Esophagus muscularis mucosa (tissue), 4 donors: ENCODE measurements at regions of chr3 and their contacts with region 1.

Region 1: DNA sequence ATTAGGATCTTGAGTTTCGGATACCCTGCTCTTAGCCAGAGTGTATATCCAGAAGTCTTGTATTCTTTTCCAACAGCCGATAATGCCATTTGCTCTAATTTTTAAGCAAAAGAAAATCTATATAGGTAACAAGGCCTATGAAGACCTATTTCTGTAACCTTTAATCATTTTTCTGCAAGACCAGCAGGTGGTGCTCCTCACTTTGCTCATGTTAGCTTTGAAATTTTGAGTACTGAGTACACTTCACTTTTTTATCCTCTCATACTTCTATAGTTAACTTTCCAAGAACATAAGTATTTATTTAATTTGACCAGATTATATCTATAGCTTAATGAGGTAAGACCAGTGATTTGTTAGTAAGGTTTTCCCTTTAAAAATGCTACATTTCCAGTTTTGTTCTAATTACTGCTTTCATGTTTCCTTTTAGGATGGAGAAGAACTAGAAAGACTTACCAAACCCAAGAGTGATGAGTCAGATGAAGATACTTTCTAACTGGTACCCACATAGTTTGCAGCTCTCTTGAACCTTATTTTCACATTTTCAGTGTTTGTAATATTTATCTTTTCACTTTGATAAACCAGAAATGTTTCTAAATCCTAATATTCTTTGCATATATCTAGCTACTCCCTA is 20.5 kb downstream of the SLC35A5 start:
- DNase-seq: no peak
- H3K4me3 ChIP-seq: no peak overlapping the region
- H3K27ac ChIP-seq: no peak overlapping the region
- H3K4me1 ChIP-seq: peaks cover 0 to 14% (median 6%) of the 10 kb centered on the region in 4 donors
- H3K27me3 ChIP-seq: no peaks in the 10 kb centered on the region
- CTCF ChIP-seq: peak; percentile 48 to 65 (median 54)
- EP300 ChIP-seq: no peak
- POLR2A ChIP-seq: no peak

Region 2: GRCh38 chr3:112635671-112636070 is 53.3 kb after region 1 on chr3:
- intact Hi-C with region 1: loop called (anchors 5 kb)
- DNase-seq: no peak
- H3K4me3 ChIP-seq: peak overlapping the region; percentile 49 to 57 (median 56)
- H3K27ac ChIP-seq: peak overlapping the region; percentile 83 to 84 (median 83)
- H3K4me1 ChIP-seq: peaks cover 18 to 98% (median 93%) of the 10 kb centered on the region in 4 donors
- H3K27me3 ChIP-seq: no peaks in the 10 kb centered on the region
- CTCF ChIP-seq: no peak
- EP300 ChIP-seq: no peak
- POLR2A ChIP-seq: no peak

Region 3: DNA sequence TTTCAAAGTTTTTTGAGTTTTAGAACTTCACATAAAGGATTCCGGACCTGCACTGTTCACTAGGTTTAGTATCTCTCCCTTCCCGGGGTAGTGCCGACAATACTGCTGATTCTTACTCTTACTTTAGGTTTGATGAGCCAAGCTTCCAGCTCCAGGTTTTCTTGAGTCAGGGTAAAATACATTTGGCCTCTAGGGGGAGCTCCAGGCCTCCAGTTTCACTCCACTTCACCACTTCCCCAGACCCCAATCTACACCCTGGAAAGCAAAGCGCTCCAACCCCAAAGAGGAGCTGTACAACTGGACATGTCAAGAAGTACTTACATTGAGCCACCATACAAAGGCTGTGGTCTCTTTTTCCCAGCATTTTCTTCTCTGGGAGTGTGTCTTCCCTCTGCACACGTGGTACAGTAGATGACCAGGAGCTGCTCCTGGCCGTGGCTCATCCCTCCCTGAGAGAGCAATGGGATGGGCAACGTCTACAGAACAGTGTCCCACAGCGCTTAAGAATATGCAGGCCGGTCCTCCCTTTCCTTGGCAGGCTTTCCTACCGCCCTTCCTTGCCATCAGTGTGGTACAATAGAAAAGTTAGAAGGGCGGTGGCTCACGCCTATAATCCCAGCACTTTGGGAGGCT is 152.5 kb after region 1 on chr3:
- intact Hi-C with region 1: loop called (anchors 10 kb)
- DNase-seq: no peak
- H3K4me3 ChIP-seq: no peak overlapping the region
- H3K27ac ChIP-seq: no peak overlapping the region
- H3K4me1 ChIP-seq: peaks cover 0 to 4% (median 0%) of the 10 kb centered on the region in 4 donors
- H3K27me3 ChIP-seq: no peaks in the 10 kb centered on the region
- CTCF ChIP-seq: peak; percentile 51 to 67 (median 53)
- EP300 ChIP-seq: no peak
- POLR2A ChIP-seq: no peak

Region 4: GRCh38 chr3:112814266-112814665 is 231.9 kb after region 1 on chr3:
- intact Hi-C with region 1: loop called (anchors 5 kb)
- DNase-seq: no peak
- H3K4me3 ChIP-seq: no peak overlapping the region
- H3K27ac ChIP-seq: peak overlapping the region in 2 of 4 donors; percentile 66 to 74
- H3K4me1 ChIP-seq: peaks cover 0 to 39% (median 35%) of the 10 kb centered on the region in 4 donors
- H3K27me3 ChIP-seq: no peaks in the 10 kb centered on the region
- CTCF ChIP-seq: peak; percentile 45 to 53 (median 46)
- EP300 ChIP-seq: no peak
- POLR2A ChIP-seq: no peak

Region 5: DNA sequence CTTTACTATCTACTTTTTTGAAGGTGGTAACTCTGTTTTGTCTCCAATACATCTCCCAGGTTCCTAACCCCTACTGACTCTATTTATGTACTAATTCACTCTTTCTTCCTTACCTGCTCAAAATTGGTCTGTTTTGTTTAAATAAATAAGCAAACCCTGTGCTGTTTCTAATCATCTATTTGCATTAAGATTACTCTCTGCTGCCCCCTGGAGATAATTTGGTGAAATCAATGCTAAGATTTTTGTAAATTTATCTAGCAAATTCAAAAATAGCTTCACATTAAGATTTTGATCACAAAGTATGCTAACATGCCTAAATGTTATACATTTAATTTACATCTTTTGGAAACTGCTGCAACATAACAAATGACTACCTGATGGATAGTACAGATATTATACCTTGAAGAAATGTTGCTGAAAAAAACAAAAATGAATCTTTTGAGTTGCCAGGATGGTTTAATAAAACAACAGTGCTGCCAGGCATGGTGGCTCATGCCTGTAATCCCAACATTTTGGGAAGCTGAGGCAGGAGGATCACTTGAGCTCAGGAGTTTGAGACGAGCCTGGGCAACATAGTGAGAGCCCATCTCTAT is 397.0 kb after region 1 on chr3:
- intact Hi-C with region 1: loop called (anchors 2 kb)
- DNase-seq: no peak
- H3K4me3 ChIP-seq: no peak overlapping the region
- H3K27ac ChIP-seq: no peak overlapping the region
- H3K4me1 ChIP-seq: peaks cover 0 to under 1% (median 0%) of the 10 kb centered on the region in 4 donors
- H3K27me3 ChIP-seq: no peaks in the 10 kb centered on the region
- CTCF ChIP-seq: peak; percentile 71 to 75 (median 73)
- EP300 ChIP-seq: no peak
- POLR2A ChIP-seq: no peak